AG04449 (cell line): ENCODE measurements at regions of chr9 and their contacts with region 1.

Region 1: GRCh38 chr9:127943731-127944144 is 6.1 kb upstream of the DPM2 start:
- DNase-seq: no peak
- H3K4me3 ChIP-seq: no peak overlapping the region
- CTCF ChIP-seq: peak; percentile 98

Region 2: GRCh38 chr9:127277099-127277498 is 666.6 kb before region 1 on chr9:
- CTCF ChIA-PET with region 1: no interaction called
- POLR2A ChIA-PET with region 1: no interaction called
- DNase-seq: no peak
- H3K4me3 ChIP-seq: no peak overlapping the region
- CTCF ChIP-seq: no peak

Region 3: GRCh38 chr9:127887792-127888191 is 55.9 kb before region 1 on chr9:
- CTCF ChIA-PET with region 1: no interaction called
- POLR2A ChIA-PET with region 1: no interaction called
- DNase-seq: no peak
- H3K4me3 ChIP-seq: no peak overlapping the region
- CTCF ChIP-seq: no peak

Region 4: DNA sequence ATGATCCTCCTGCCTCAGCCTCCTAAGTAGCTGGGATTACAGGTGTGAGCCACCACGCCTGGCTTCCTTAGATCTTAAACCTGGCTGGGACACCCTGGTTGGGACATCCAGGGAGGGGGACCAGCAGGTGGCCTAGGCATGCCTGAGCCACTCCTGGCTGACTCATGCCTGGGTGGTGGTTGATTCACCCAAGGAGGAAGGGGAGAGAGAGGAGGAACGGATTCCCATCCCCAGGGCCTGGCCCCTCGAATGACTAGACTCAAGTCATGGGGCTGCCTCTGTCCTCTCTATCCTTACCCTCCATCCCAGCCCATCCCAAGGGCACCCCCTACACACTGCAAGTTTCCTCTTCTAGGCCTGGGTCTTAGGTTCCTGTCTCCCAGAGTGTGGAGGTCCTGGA is 24.3 kb after region 1 on chr9:
- CTCF ChIA-PET with region 1: interaction called, 226 read pairs
- POLR2A ChIA-PET with region 1: no interaction called
- DNase-seq: no peak
- H3K4me3 ChIP-seq: no peak overlapping the region
- CTCF ChIP-seq: no peak

Region 5: GRCh38 chr9:128020692-128021091 is 77.0 kb after region 1 on chr9:
- CTCF ChIA-PET with region 1: interaction called, 27 read pairs
- POLR2A ChIA-PET with region 1: no interaction called
- DNase-seq: no peak
- H3K4me3 ChIP-seq: no peak overlapping the region
- CTCF ChIP-seq: no peak

Region 6: GRCh38 chr9:128067876-128068613 is 124.3 kb after region 1 on chr9 and contains the start of gene SLC25A25:
- CTCF ChIA-PET with region 1: interaction called, 18 read pairs
- POLR2A ChIA-PET with region 1: no interaction called
- DNase-seq: peak; percentile 92
- H3K4me3 ChIP-seq: peak within 1 kb of the TSS; percentile 80
- CTCF ChIP-seq: no peak

Region 7: DNA sequence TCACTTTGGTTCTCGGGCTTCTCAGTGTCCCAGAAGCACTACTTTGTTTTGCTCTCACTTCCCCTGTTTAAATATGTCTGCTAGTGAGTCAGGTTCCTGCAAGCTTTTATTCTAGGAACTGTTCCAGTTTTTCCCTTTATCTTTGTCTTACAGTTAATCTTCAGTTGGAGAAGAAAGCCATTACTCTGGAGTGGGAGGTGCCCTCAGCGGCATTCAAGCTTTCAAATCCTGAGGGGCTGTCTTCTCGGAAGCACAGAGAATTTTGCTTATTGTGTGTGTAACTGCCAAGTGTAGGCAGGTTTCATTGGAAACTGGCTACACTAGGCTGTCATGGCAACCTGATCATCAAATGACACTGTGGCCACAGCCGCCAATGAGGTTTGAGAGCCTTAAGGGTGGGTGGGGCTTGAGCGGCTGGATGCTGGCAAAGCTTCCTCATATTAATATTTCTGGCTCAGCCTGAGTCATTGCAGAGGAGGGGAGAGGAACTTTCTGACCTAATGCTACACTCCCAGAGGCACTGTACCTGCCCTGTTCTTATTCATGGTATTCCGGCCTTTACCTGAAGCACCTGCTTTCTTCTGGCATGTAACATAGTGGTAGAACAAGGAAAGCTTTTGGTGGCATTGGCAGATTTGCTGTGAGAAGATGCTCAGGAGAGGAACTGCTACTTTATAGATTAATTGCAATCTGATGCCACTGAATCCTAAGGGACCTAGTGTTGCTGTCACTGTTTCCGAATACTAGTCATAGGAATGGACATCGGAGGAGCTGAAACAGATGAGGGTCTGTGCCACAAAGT is 150.6 kb after region 1 on chr9:
- CTCF ChIA-PET with region 1: interaction called, 131 read pairs
- POLR2A ChIA-PET with region 1: interaction called, 3 read pairs
- DNase-seq: peak; percentile 80
- H3K4me3 ChIP-seq: peak overlapping the region; percentile 32
- CTCF ChIP-seq: no peak